Naive thymus-derived CD4-positive, alpha-beta T cell (primary cell): ENCODE measurements at regions of chr20 and their contacts with region 1.

Region 1: DNA sequence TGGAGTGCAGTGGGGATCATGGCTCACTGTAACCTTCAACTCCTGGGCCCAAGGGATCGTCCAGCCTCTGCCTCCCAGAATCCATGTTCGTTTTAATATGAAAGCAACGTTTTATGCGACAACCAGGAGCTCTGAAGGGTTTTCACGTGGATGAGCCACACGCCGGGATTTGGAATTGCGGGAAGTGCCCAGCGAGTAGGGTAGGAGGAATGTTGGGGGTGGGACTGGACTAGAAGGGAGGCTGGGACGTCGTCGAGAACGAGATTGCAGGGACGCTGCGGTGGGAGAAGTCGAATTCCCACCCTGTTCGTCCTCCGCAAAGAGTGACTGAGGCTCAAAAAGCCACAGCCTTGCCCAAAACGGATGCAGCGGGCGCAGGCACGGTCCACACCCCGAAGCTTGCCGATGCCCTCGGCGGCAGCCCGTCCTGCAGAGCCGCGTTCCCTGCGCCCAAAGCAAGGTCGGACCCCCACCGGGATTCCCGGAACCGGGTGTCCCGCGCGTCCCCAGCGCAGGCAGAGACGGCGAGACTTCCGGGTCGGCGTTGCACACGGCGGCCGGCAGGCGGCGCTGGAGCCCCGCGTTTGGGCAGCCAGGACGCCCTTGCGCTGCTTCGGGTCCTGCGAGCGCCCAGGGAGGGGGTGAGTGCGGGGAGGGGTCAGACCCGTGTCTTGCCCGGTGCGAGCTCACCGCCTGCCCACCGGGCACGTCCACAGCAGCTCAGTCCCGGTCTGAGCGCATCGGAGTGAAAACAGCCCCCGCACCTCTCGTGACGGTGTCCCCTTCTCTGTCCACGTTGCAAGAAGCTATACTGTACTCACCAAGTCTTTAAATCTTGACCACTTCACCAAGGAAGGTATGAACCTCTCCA is 87.8 kb downstream of the DHX35 start:
- DNase-seq: peak; percentile 62 to 89 (median 78)
- ATAC-seq: peak; percentile 89
- H3K4me3 ChIP-seq: peak overlapping the region; percentile 76
- H3K4me3 Mint-ChIP-seq: peak overlapping the region; percentile 79 to 96 (median 89)
- H3K27ac ChIP-seq: peak overlapping the region; percentile 32
- H3K27ac Mint-ChIP-seq: peak overlapping the region; percentile 60 to 84 (median 79)
- H3K4me1 ChIP-seq: peaks cover 9% of the 10 kb centered on the region in 2 donors
- H3K4me1 Mint-ChIP-seq: peaks cover 0 to 12% (median 7%) of the 10 kb centered on the region in 7 donors
- H3K27me3 ChIP-seq: no peaks in the 10 kb centered on the region
- H3K27me3 Mint-ChIP-seq: peaks cover 0 to 16% (median 0%) of the 10 kb centered on the region in 5 donors

Region 2: GRCh38 chr20:38633577-38634093 is 416.3 kb before region 1 on chr20:
- CTCF ChIA-PET with region 1: interaction called, 3 read pairs
- POLR2A ChIA-PET with region 1: no interaction called
- intact Hi-C with region 1: loop called in 1 of 2 experiments (anchors 5 kb)
- DNase-seq: peak; percentile 6 to 56 (median 40)
- ATAC-seq: peak; percentile 84
- H3K4me3 ChIP-seq: no peak overlapping the region
- H3K4me3 Mint-ChIP-seq: no peak overlapping the region
- H3K27ac ChIP-seq: no peak overlapping the region
- H3K27ac Mint-ChIP-seq: no peak overlapping the region
- H3K4me1 ChIP-seq: no peaks in the 10 kb centered on the region
- H3K4me1 Mint-ChIP-seq: peaks cover 0 to 7% (median 5%) of the 10 kb centered on the region in 7 donors
- H3K27me3 ChIP-seq: no peaks in the 10 kb centered on the region
- H3K27me3 Mint-ChIP-seq: peaks cover 11 to 24% (median 18%) of the 10 kb centered on the region in 5 donors

Region 3: GRCh38 chr20:38748097-38748860 is 301.6 kb before region 1 on chr20 and contains the start of gene ACTR5:
- CTCF ChIA-PET with region 1: no interaction called
- POLR2A ChIA-PET with region 1: no interaction called
- intact Hi-C with region 1: loop called in 1 of 2 experiments (anchors 2 kb)
- DNase-seq: peak; percentile 95 to 99 (median 98)
- ATAC-seq: peak; percentile 96
- H3K4me3 ChIP-seq: peak within 1 kb of the TSS; percentile 72
- H3K4me3 Mint-ChIP-seq: peak within 1 kb of the TSS; percentile 95 to 99 (median 97)
- H3K27ac ChIP-seq: peak within 1 kb of the TSS; percentile 95
- H3K27ac Mint-ChIP-seq: peak within 1 kb of the TSS; percentile 93 to 100 (median 99)
- H3K4me1 ChIP-seq: peaks cover 12 to 13% of the 10 kb centered on the region in 2 donors
- H3K4me1 Mint-ChIP-seq: peaks cover 11 to 40% (median 22%) of the 10 kb centered on the region in 7 donors
- H3K27me3 ChIP-seq: no peaks in the 10 kb centered on the region
- H3K27me3 Mint-ChIP-seq: peaks cover 4 to 13% (median 5%) of the 10 kb centered on the region in 5 donors
- total RNA-seq, gene ACTR5: 8.9 to 20.8 (median 15.2) TPM

Region 4: GRCh38 chr20:38926142-38926933 is 123.6 kb before region 1 on chr20 and contains the start of gene FAM83D:
- CTCF ChIA-PET with region 1: interaction called, 10 read pairs
- POLR2A ChIA-PET with region 1: no interaction called
- intact Hi-C with region 1: loop called (anchors 1 kb)
- DNase-seq: peak; percentile 86 to 98 (median 92)
- ATAC-seq: peak; percentile 97
- H3K4me3 ChIP-seq: peak within 1 kb of the TSS; percentile 61
- H3K4me3 Mint-ChIP-seq: peak within 1 kb of the TSS; percentile 76 to 90 (median 80)
- H3K27ac ChIP-seq: peak within 1 kb of the TSS; percentile 64
- H3K27ac Mint-ChIP-seq: peak within 1 kb of the TSS in 8 of 9 donors; percentile 27 to 83 (median 72)
- H3K4me1 ChIP-seq: peaks cover 5 to 22% of the 10 kb centered on the region in 2 donors
- H3K4me1 Mint-ChIP-seq: peaks cover 6 to 43% (median 17%) of the 10 kb centered on the region in 7 donors
- H3K27me3 ChIP-seq: no peaks in the 10 kb centered on the region
- H3K27me3 Mint-ChIP-seq: no peaks in the 10 kb centered on the region
- total RNA-seq, gene FAM83D: 1.4 to 11.1 (median 1.8) TPM

Region 5: GRCh38 chr20:39036011-39036410 is 13.9 kb before region 1 on chr20:
- CTCF ChIA-PET with region 1: interaction called, 29 read pairs
- POLR2A ChIA-PET with region 1: no interaction called
- intact Hi-C with region 1: no loop called
- DNase-seq: no peak
- ATAC-seq: no peak
- H3K4me3 ChIP-seq: no peak overlapping the region
- H3K4me3 Mint-ChIP-seq: no peak overlapping the region
- H3K27ac ChIP-seq: no peak overlapping the region
- H3K27ac Mint-ChIP-seq: peak overlapping the region in 1 of 9 donors; percentile 23
- H3K4me1 ChIP-seq: no peaks in the 10 kb centered on the region
- H3K4me1 Mint-ChIP-seq: no peaks in the 10 kb centered on the region
- H3K27me3 ChIP-seq: no peaks in the 10 kb centered on the region
- H3K27me3 Mint-ChIP-seq: no peaks in the 10 kb centered on the region

Region 6: DNA sequence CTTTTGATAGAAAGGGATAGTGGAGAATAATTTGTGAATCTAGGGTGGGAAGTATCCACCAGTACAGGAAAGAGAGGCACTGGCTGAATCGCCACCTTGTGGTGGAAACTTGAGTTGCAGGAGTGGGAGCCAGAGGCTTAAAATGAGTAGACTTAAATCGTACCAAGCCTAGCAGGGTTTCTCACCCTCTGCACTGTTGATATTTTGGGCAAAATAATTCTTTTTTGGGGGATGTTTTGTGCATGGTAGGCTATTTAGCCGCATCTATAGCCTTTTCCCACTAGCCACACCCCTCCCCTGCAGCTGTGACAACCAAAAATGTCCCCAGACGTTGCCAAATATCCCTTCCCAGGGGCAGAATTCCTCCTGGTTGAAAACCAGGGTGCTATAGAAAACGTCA is 31.3 kb after region 1 on chr20:
- CTCF ChIA-PET with region 1: interaction called, 100 read pairs
- POLR2A ChIA-PET with region 1: no interaction called
- intact Hi-C with region 1: loop called (anchors 1 kb)
- DNase-seq: peak; percentile 46 to 81 (median 68)
- ATAC-seq: peak; percentile 78
- H3K4me3 ChIP-seq: no peak overlapping the region
- H3K4me3 Mint-ChIP-seq: no peak overlapping the region
- H3K27ac ChIP-seq: no peak overlapping the region
- H3K27ac Mint-ChIP-seq: no peak overlapping the region
- H3K4me1 ChIP-seq: no peaks in the 10 kb centered on the region
- H3K4me1 Mint-ChIP-seq: peaks cover 0 to 12% (median 0%) of the 10 kb centered on the region in 7 donors
- H3K27me3 ChIP-seq: no peaks in the 10 kb centered on the region
- H3K27me3 Mint-ChIP-seq: peaks cover 11 to 52% (median 26%) of the 10 kb centered on the region in 5 donors